ENCODE measurements at regions of chr4 and their contacts with region 1.

Region 1: DNA sequence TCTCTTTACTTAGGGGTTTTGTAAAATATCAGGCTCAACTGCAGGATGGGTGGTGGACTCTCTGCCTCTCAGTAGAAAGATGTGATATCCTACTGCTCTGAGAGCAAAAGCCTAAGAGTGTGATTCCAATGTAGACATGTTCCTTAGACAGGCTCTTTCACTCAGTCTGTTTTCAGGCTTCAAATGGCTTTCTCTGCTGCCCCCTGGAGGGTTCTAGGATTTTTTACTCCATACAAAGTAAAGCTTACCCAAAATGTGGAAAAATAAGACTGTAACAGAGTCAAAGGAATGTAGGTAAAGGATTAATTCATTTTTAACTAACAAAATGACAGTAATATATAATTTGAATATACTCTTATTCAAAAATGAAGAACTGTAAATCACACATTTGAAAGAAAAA is 32.1 kb downstream of the ZGRF1 start:
- DNase-seq: peak; percentile 59
- ATAC-seq: no peak
- H3K4me3 ChIP-seq: no peak overlapping the region
- H3K4me3 Mint-ChIP-seq: no peak overlapping the region
- H3K27ac ChIP-seq: no peak overlapping the region
- H3K27ac Mint-ChIP-seq: no peak overlapping the region
- H3K4me1 ChIP-seq: no peaks in the 10 kb centered on the region
- H3K4me1 Mint-ChIP-seq: no peaks in the 10 kb centered on the region
- H3K27me3 ChIP-seq: no peaks in the 10 kb centered on the region
- H3K27me3 Mint-ChIP-seq: no peaks in the 10 kb centered on the region
- CTCF ChIP-seq: peak; percentile 77

Region 2: DNA sequence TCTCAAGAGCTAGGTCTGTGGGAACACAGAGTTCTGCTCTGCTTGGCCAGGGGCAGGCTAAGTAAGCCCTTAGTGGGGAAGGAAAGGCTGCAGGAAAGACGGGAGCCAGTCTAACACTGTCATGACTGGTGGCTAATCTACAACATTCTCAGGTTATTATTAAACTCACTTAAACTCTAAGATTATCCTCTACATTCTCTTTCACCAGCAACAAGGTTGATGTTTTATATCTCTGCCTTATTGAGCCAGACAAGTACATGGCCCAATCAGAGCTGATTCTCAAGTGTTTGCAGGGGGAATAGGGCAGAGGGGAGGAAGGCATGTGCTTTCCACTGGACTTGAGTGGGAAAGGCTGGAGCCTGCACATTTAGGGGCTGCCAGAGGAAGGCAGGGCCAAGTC is 510.3 kb before region 1 on chr4:
- CTCF ChIA-PET with region 1: interaction called, 42 read pairs
- POLR2A ChIA-PET with region 1: no interaction called
- intact Hi-C with region 1: loop called (anchors 1 kb)
- DNase-seq: no peak
- ATAC-seq: no peak
- H3K4me3 ChIP-seq: no peak overlapping the region
- H3K4me3 Mint-ChIP-seq: no peak overlapping the region
- H3K27ac ChIP-seq: no peak overlapping the region
- H3K27ac Mint-ChIP-seq: no peak overlapping the region
- H3K4me1 ChIP-seq: no peaks in the 10 kb centered on the region
- H3K4me1 Mint-ChIP-seq: no peaks in the 10 kb centered on the region
- H3K27me3 ChIP-seq: peaks cover 0 to 4% (median 0%) of the 10 kb centered on the region in 4 experiments
- H3K27me3 Mint-ChIP-seq: no peaks in the 10 kb centered on the region
- CTCF ChIP-seq: no peak

Region 3: GRCh38 chr4:112099701-112100297 is 504.8 kb before region 1 on chr4:
- CTCF ChIA-PET with region 1: interaction called, 42 read pairs
- POLR2A ChIA-PET with region 1: no interaction called
- intact Hi-C with region 1: loop called (anchors 1 kb)
- DNase-seq: peak; percentile 57
- ATAC-seq: peak; percentile 36
- H3K4me3 ChIP-seq: no peak overlapping the region
- H3K4me3 Mint-ChIP-seq: no peak overlapping the region
- H3K27ac ChIP-seq: no peak overlapping the region
- H3K27ac Mint-ChIP-seq: no peak overlapping the region
- H3K4me1 ChIP-seq: no peaks in the 10 kb centered on the region
- H3K4me1 Mint-ChIP-seq: no peaks in the 10 kb centered on the region
- H3K27me3 ChIP-seq: peaks cover 0 to 4% (median 0%) of the 10 kb centered on the region in 4 experiments
- H3K27me3 Mint-ChIP-seq: no peaks in the 10 kb centered on the region
- CTCF ChIP-seq: peak; percentile 78

Region 4: DNA sequence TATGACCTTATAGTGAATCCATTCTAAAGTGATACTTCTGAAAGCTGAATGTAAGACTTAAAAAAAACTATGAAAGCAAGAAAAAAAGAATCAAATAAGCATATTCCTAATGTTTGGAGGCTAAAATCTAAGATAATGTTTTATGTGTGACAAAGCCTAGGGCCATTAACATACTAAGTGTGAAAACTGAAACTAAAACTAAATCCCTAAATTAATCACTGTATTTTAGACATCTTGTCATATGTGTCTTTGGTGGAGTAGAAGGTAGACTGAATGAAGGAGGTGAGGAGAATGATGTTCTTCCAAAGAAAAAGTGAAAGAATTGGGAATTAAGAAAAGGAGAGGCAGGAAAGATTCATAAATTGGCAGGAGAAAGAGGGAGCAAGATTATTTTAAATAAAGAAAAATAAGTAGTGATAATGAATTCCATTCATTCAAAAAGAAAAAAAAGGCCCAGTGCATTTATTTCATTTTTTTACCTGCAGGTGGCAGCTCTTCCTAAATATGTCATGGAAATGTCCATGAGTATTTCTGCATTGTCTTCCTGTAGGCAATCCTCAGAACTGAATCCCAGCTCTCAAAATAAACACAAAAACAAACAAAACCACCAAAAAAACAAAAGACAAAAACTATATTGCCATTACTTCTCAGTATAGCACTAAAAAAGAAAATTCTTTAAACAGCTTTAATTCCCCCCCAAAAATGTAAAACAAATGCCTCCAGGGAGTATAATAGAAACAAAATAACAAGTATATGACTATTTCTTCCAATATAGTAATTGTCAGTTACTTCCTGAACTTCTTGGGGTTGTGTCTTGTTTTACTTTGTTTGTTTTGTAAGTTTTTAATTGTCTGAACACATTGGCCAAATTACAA is 390.0 kb before region 1 on chr4:
- CTCF ChIA-PET with region 1: interaction called, 17 read pairs
- POLR2A ChIA-PET with region 1: no interaction called
- intact Hi-C with region 1: loop called (anchors 1 kb)
- DNase-seq: peak; percentile 38
- ATAC-seq: no peak
- H3K4me3 ChIP-seq: no peak overlapping the region
- H3K4me3 Mint-ChIP-seq: no peak overlapping the region
- H3K27ac ChIP-seq: no peak overlapping the region
- H3K27ac Mint-ChIP-seq: no peak overlapping the region
- H3K4me1 ChIP-seq: no peaks in the 10 kb centered on the region
- H3K4me1 Mint-ChIP-seq: no peaks in the 10 kb centered on the region
- H3K27me3 ChIP-seq: no peaks in the 10 kb centered on the region
- H3K27me3 Mint-ChIP-seq: no peaks in the 10 kb centered on the region
- CTCF ChIP-seq: peak; percentile 70

Region 5: GRCh38 chr4:112327965-112328733 is 276.4 kb before region 1 on chr4:
- CTCF ChIA-PET with region 1: interaction called, 43 read pairs
- POLR2A ChIA-PET with region 1: no interaction called
- intact Hi-C with region 1: loop called (anchors 1 kb)
- DNase-seq: peak; percentile 70
- ATAC-seq: peak; percentile 47
- H3K4me3 ChIP-seq: no peak overlapping the region
- H3K4me3 Mint-ChIP-seq: peak overlapping the region; percentile 49
- H3K27ac ChIP-seq: no peak overlapping the region
- H3K27ac Mint-ChIP-seq: no peak overlapping the region
- H3K4me1 ChIP-seq: no peaks in the 10 kb centered on the region
- H3K4me1 Mint-ChIP-seq: peaks cover 5% of the 10 kb centered on the region
- H3K27me3 ChIP-seq: no peaks in the 10 kb centered on the region
- H3K27me3 Mint-ChIP-seq: no peaks in the 10 kb centered on the region
- CTCF ChIP-seq: peak; percentile 75